Left cardiac atrium (tissue), 4 donors: ENCODE measurements at regions of chr11 and their contacts with region 1.

Region 1: GRCh38 chr11:115504276-115505158 is at the start of gene CADM1:
- DNase-seq: peak; percentile 96
- ATAC-seq: peak; percentile 95 to 98
- total RNA-seq, gene CADM1: 25.0 to 34.3 TPM

Region 2: GRCh38 chr11:115334932-115335788 is 169.4 kb before region 1 on chr11:
- intact Hi-C with region 1: loop called (anchors 5 to 10 kb)
- DNase-seq: no peak
- ATAC-seq: no peak

Region 3: GRCh38 chr11:115379528-115379927 is 125.0 kb before region 1 on chr11:
- intact Hi-C with region 1: no loop called
- DNase-seq: no peak
- ATAC-seq: no peak

Region 4: GRCh38 chr11:115672999-115673411 is 168.5 kb after region 1 on chr11:
- intact Hi-C with region 1: loop called in 1 of 2 experiments (anchors 10 kb)
- DNase-seq: peak; percentile 53
- ATAC-seq: peak; percentile 88 to 93